Thyroid gland (tissue), 4 donors: ENCODE measurements at regions of chr1 and their contacts with region 1.

Region 1: DNA sequence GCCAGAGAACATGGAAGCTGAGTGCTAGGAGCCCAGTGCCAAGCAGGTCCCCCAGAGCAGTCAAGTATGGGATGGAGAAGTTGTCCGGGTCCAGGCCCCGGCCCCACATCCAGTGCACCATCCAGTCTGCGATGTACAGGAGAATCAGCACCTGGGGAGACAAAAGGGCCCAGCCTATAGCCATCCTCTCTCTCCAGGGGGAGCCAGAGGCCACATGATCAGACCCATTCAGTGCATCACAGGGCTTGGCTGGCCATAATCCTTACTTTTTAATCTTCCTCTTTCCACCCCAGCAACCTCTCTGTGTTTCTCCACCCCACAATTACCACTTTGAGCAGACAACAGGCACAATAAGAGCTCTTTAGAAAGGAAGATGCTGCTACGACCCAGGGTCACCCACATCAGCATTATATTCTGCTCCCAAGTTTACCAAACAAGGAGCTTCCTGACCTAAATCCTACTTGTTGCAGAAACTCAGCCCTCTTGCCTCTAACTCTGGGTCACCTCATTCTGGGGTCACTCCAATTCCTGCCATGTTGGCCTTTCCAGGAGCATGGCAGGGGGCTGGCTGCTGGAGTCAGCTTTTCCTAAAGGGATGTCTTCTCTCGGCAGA is 16.4 kb upstream of the RAB29 start:
- DNase-seq: peak; percentile 67 to 74
- H3K4me3 ChIP-seq: no peak overlapping the region
- H3K27ac ChIP-seq: no peak overlapping the region
- H3K4me1 ChIP-seq: no peaks in the 10 kb centered on the region
- H3K27me3 ChIP-seq: no peaks in the 10 kb centered on the region
- CTCF ChIP-seq: peak; percentile 16 to 77 (median 66)
- POLR2A ChIP-seq: no peak

Region 2: GRCh38 chr1:205919026-205919746 is 127.5 kb after region 1 on chr1:
- intact Hi-C with region 1: loop called (anchors 5 kb)
- DNase-seq: peak; percentile 87 to 91
- H3K4me3 ChIP-seq: no peak overlapping the region
- H3K27ac ChIP-seq: peak overlapping the region; percentile 41 to 89 (median 83)
- H3K4me1 ChIP-seq: peaks cover 44 to 55% of the 10 kb centered on the region in 2 donors
- H3K27me3 ChIP-seq: no peaks in the 10 kb centered on the region
- CTCF ChIP-seq: peak; percentile 80 to 99 (median 94)
- POLR2A ChIP-seq: peak in 1 of 2 donors; percentile 8